Posterior vena cava (tissue), 2 donors: ENCODE measurements at regions of chr4 and their contacts with region 1.

Region 1: GRCh38 chr4:109815151-109816081 is at the start of gene GAR1:
- DNase-seq: peak; percentile 96
- total RNA-seq, gene GAR1: 9.4 to 14.6 TPM

Region 2: GRCh38 chr4:109424093-109424841 is 391.1 kb before region 1 on chr4:
- intact Hi-C with region 1: loop called (anchors 5 to 10 kb)
- DNase-seq: no peak

Region 3: GRCh38 chr4:109702950-109703663 is 112.3 kb before region 1 on chr4 and contains the start of gene CASP6:
- intact Hi-C with region 1: loop called in 1 of 2 experiments (anchors 5 kb)
- DNase-seq: peak; percentile 92
- total RNA-seq, gene CASP6: 10.5 to 11.6 TPM

Region 4: DNA sequence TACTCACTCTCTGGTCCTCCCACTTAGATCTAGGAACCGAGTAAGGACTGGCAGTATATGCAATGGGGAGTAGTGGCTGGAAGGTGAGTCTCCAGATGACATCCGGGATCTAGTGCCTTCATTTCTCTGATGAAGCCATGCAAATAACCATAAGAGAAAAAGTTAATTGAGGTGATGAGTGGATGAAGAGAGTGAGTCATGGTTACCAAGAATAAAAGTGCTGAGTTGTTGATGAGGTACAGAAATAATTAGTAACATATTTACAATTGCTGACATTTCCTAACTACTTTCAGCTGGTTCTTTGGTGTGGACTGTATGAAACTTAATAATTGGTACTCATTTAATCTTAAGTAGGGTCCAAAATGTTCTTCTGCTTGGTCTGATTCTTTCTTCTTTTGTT is 954.2 kb after region 1 on chr4:
- intact Hi-C with region 1: no loop called
- DNase-seq: no peak